Cardiac septum (tissue), 1 donor: ENCODE measurements at regions of chr11 and their contacts with region 1.

Region 1: DNA sequence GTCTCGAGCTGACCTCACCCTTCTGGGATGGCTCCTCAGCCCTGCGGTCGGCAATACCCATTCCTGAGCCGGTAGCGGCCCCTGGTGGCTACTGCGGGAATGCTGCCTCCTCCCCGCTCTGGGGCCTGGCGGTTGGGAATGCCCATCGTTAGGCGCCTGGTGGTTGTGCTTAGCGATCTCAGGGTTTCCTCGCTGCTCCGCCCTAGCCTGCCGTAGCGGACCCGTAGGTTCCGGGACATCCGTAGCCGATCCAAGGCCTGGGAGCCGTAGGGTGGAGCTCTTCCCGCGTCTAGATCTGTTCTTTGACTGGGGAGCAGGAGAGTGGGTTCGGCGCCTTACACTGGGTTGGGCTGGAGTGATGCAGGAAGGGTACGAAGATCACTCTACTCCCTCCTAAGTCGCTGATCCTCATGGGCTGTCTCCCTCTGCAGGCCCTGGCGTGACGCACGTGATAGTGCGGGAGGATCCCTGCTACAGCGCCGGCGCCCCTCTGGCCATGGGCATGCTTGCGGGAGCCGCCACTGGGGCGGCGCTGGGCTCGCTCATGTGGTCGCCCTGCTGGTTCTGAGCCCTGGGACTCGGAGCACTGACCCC is 14.8 kb downstream of the PLEKHB1 start:
- DNase-seq: peak; percentile 95

Region 2: GRCh38 chr11:73350908-73351636 is 310.1 kb before region 1 on chr11:
- intact Hi-C with region 1: no loop called
- DNase-seq: no peak

Region 3: GRCh38 chr11:73625696-73626318 is 35.3 kb before region 1 on chr11:
- intact Hi-C with region 1: loop called (anchors 1 kb)
- DNase-seq: peak; percentile 82